ENCODE measurements at regions of chr3 and their contacts with region 1.

Region 1: DNA sequence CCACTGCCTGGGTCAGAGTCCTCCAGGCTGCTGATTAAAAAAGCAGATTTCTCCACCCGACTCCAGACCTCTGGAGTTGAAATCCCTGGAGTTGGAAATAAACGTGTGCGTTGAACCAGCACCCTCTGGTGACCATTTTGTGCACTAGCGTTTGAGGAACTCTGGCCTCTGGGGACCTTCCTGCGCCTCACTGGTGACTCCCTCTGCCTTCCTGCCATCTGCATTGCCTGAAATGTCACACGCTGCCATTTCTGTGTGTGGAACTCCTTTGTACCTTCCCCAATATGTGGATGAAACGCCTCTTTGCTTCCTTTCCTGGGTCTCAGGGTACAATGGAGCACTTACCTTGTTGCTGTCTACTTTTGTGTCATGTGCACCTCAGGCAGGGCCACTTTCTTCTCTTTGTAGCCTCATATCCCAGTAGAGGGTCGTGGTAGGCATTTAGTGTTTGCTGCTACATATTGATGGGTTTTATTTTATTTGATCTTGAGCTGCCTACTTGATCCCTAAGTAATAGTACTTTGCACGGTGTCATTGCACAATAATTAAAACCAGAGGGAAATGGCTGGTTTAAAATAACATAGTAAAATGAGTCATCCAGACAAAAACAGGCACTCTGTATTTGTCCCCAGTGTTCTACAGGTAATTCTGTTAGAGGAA is 56.8 kb downstream of the GPR171 start:
- DNase-seq: peak; percentile 53 to 76 (median 73)
- ATAC-seq: peak; percentile 99 to 100 (median 100)
- H3K4me3 ChIP-seq: no peak overlapping the region
- H3K27ac ChIP-seq: no peak overlapping the region
- H3K4me1 ChIP-seq: peaks cover 0 to 10% (median 2%) of the 10 kb centered on the region in 4 donors
- H3K27me3 ChIP-seq: no peaks in the 10 kb centered on the region
- CTCF ChIP-seq: peak; percentile 83 to 96 (median 92)
- POLR2A ChIP-seq: no peak

Region 2: GRCh38 chr3:150798122-150798626 is 348.0 kb before region 1 on chr3:
- intact Hi-C with region 1: loop called in 1 of 2 experiments (anchors 10 kb)
- DNase-seq: no peak
- ATAC-seq: peak; percentile 23 to 67 (median 58)
- H3K4me3 ChIP-seq: no peak overlapping the region
- H3K27ac ChIP-seq: no peak overlapping the region
- H3K4me1 ChIP-seq: no peaks in the 10 kb centered on the region
- H3K27me3 ChIP-seq: no peaks in the 10 kb centered on the region
- CTCF ChIP-seq: no peak
- POLR2A ChIP-seq: no peak

Region 3: GRCh38 chr3:150913133-150913922 is 232.9 kb before region 1 on chr3:
- intact Hi-C with region 1: no loop called
- DNase-seq: no peak
- ATAC-seq: no peak
- H3K4me3 ChIP-seq: no peak overlapping the region
- H3K27ac ChIP-seq: no peak overlapping the region
- H3K4me1 ChIP-seq: no peaks in the 10 kb centered on the region
- H3K27me3 ChIP-seq: no peaks in the 10 kb centered on the region
- CTCF ChIP-seq: no peak
- POLR2A ChIP-seq: no peak

Region 4: GRCh38 chr3:151477591-151478334 is 331.6 kb after region 1 on chr3:
- intact Hi-C with region 1: no loop called
- DNase-seq: no peak
- ATAC-seq: no peak
- H3K4me3 ChIP-seq: no peak overlapping the region
- H3K27ac ChIP-seq: no peak overlapping the region
- H3K4me1 ChIP-seq: no peaks in the 10 kb centered on the region
- H3K27me3 ChIP-seq: no peaks in the 10 kb centered on the region
- CTCF ChIP-seq: no peak
- POLR2A ChIP-seq: no peak

Measured in right lobe of liver (tissue), 6 donors.